HAP-1 (cell line): ENCODE measurements at regions of chr2 and their contacts with region 1.

Region 1: DNA sequence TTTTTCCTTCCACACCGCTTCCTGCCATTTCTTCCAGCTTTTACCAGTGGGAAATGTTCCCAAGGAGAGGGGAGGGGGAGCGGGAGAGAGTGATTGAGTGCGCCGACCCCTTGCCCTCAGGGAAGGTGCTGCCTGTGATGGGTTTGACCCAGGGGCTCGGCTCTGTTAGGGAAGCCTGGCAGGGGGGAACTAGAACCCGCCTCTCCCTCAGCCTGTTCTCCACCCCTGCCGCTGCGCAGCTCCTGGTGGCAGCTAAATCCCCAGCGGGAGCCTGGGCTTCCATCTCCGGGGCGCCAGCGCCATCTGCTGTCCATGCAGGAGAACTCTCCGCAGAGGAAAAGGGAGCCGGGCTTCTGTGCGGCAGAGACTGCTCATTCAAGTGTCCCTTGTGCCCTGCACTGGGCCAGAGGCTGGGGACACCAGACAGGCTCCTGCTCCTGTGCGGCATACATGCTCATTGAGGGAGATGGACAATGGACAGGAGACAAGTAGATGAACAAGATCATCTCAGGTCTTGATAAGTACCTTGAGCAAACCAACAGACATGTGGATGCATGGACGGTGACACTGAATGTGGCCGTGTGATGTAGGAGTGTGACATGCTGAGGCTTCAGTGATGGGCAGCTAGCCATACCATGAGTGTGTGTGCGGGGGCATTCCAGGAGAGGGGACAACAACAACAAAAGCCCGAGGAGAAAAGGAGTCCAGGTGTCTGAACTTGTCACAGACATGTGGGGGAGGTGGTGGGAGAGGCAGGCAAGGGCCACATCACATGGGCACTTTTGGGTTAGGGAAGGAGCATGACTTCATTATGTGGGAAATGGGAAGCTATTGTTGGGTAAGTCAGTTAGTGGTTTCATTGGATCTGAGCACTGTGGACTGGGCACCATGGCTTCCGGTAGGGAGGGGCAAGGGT is 13.3 kb downstream of the CHPF start:
- DNase-seq: peak; percentile 82 to 94
- H3K4me3 ChIP-seq: no peak overlapping the region
- H3K4me1 ChIP-seq: no peaks in the 10 kb centered on the region
- H3K27me3 ChIP-seq: peaks cover 55% of the 10 kb centered on the region

Region 2: DNA sequence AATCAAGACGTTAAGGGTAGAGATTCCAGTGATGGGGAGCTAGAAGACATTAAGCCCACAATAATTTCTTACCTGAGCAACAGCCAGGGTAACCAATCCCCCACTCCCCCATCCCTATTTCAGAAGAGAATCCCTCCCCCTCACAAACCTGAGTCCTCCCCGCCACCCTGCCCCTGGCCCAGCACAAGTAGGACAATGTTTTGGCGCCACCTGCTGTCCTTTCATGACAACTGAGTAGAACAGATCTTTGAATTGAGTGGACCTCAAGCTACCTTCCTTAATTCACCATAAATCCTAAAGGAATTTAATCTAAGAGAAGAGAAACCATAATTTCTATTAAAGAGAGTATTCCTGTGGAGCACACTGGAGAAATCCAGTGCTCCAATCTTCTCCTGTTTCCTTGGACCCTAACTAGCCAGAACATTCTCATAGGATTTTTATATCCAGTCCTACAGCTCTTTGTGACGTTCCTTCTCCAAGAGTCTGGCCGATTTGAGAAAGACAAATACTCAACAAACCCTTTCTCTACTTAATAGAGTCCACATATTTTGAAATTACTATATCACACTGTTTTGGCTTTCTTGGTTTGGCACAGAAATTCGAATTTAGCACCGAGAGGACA is 410.8 kb before region 1 on chr2:
- in situ Hi-C with region 1: no loop called
- DNase-seq: peak; percentile 47 to 83
- H3K4me3 ChIP-seq: no peak overlapping the region
- H3K4me1 ChIP-seq: no peaks in the 10 kb centered on the region; the same call in 1 of the 2 replicates
- H3K27me3 ChIP-seq: no peaks in the 10 kb centered on the region

Region 3: DNA sequence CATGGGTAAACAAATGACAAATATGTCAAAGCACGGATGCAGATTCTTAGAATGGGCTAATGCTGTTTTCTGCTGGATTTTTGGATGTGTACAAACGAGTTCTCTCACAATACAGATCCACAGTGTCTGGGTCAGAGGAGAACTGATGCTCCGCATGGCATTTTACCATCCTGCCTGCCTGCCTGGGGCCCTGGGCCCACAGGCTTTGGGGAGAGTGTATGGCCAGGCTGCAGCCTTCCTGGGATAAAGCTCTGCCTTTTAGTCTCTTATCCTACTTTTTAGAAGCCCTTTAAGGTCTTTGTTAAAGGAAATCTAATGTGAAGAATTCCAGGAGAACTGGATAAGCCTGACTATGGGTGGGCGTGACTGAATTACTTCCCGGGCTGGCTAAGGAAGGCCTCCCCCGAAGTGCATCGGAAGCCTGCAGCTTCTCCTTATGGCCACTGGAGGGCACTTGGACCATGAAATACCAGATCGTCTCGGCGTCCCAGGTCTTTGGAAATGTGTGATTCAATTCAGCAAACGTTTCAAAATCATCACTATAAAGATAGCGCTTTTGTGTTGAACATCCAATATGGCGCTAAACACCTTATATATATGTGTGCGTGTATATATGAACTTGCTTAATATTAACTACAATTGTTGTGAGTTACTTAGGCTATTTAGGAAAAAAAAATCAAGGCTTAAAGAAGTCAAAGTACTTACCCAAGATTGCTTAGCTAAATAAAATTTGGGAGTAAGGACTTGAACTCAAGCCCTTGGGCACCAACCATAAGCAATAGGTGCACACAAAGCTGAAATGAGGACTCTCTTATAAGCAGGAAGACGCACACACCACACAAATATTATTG is 127.4 kb before region 1 on chr2:
- in situ Hi-C with region 1: loop called (anchors 5 kb)
- DNase-seq: peak; percentile 77 to 81
- H3K4me3 ChIP-seq: no peak overlapping the region
- H3K4me1 ChIP-seq: no peaks in the 10 kb centered on the region
- H3K27me3 ChIP-seq: no peaks in the 10 kb centered on the region

Region 4: DNA sequence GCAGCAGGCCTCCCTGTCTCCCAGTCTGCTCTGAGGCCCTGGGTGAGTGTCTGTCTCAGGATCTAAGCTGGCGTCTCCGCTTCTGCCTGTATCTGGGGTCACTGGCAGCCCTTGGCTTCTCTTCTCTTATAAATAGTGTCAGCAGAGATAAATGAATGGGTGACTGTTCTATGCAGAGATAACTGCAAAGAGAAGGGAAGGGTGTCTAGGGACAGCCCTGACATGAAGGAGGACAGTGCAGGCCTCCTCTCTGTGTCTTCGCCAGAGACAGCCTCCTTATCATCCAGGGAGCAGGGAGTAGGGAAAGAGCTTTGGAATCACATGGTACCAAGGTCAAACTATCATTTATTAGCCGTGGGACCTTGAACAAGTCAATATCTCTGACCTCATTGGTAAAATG is 59.9 kb before region 1 on chr2:
- in situ Hi-C with region 1: loop called (anchors 5 kb)
- DNase-seq: no peak
- H3K4me3 ChIP-seq: no peak overlapping the region
- H3K4me1 ChIP-seq: no peaks in the 10 kb centered on the region
- H3K27me3 ChIP-seq: no peaks in the 10 kb centered on the region